Right cardiac atrium (tissue), 5 donors: ENCODE measurements at regions of chr9 and their contacts with region 1.

Region 1: DNA sequence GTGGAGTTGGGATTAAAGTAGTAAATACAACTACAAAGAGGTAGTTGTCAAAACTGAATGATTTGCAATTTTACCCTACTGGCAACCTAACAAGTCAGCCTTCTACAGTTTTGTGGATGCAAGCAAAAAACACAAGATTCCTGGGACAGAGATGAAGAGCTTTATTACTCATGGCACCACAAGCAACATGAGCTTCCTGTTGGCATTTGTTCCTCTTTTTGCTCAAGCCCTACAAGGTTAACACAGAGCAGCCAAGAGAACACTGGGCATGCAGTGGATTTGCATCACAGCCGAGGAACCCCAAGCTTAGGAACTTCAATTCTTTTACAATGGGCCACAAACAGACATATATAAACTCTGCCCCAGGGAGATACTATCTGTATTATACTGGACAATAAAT is 28.8 kb upstream of the DMAC1 start:
- DNase-seq: no peak
- ATAC-seq: no peak
- H3K4me3 ChIP-seq: no peak overlapping the region
- H3K27ac ChIP-seq: no peak overlapping the region
- H3K4me1 ChIP-seq: no peaks in the 10 kb centered on the region
- H3K27me3 ChIP-seq: no peaks in the 10 kb centered on the region

Region 2: GRCh38 chr9:7756088-7756487 is 72.2 kb before region 1 on chr9:
- intact Hi-C with region 1: loop called in 1 of 4 experiments (anchors 10 kb)
- DNase-seq: no peak
- ATAC-seq: no peak
- H3K4me3 ChIP-seq: no peak overlapping the region
- H3K27ac ChIP-seq: no peak overlapping the region
- H3K4me1 ChIP-seq: no peaks in the 10 kb centered on the region
- H3K27me3 ChIP-seq: no peaks in the 10 kb centered on the region